A549 (cell line): ENCODE measurements at regions of chr2 and their contacts with region 1.

Region 1: DNA sequence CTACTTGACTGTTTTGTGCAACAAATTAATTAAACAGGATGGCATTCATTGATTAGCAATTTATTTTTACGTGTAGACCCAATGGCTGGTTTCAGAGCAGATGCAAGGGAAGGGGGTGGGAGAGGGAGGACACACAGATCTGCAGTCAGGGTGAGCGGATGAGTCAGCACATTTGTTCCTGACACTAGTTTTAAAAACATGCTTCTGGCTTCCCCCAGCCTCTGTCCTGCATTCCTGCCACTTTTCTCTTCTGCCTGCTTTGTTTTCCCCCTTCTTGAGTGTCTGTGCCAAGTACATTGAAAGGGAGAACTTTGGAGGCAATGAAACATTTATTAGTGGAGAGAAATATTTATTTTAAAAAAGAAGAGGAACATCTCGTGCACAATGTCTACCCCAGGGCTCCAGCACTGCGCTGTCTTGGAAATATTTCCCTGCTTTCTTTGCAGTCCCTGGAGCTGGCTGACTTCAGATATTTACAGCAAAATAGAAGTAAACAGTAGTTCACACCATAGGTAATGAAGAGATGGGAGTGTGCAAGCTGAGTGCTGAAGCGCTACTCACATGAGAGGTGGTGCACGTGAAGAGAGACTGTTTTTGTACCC is 52.2 kb downstream of the NRP2 start:
- DNase-seq: peak in 1 of 2 experiments; percentile 52
- ATAC-seq: peak in 1 of 2 experiments; percentile 50; a peak in 2 of 6 replicates
- H3K4me3 ChIP-seq: no peak overlapping the region
- H3K27ac ChIP-seq: peak overlapping the region; percentile 90 to 91
- H3K4me1 ChIP-seq: peaks cover 58% of the 10 kb centered on the region
- CTCF ChIP-seq: no peak
- EP300 ChIP-seq: no peak
- POLR2A ChIP-seq: no peak
- RAD21 ChIP-seq: no peak

Region 2: GRCh38 chr2:205721057-205721449 is 13.5 kb before region 1 on chr2:
- CTCF ChIA-PET with region 1: interaction called, 18 read pairs
- POLR2A ChIA-PET with region 1: no interaction called
- DNase-seq: no peak
- ATAC-seq: peak; percentile 57 to 67; a peak in 3 of 6 replicates
- H3K4me3 ChIP-seq: no peak overlapping the region
- H3K27ac ChIP-seq: peak overlapping the region; percentile 6 to 72; a peak in 4 of 6 replicates
- H3K4me1 ChIP-seq: peaks cover 89% of the 10 kb centered on the region
- CTCF ChIP-seq: peak; percentile 18; the same call in 2 of the 3 replicates
- EP300 ChIP-seq: no peak
- POLR2A ChIP-seq: no peak
- RAD21 ChIP-seq: no peak; a peak in 1 of 5 replicates

Region 3: DNA sequence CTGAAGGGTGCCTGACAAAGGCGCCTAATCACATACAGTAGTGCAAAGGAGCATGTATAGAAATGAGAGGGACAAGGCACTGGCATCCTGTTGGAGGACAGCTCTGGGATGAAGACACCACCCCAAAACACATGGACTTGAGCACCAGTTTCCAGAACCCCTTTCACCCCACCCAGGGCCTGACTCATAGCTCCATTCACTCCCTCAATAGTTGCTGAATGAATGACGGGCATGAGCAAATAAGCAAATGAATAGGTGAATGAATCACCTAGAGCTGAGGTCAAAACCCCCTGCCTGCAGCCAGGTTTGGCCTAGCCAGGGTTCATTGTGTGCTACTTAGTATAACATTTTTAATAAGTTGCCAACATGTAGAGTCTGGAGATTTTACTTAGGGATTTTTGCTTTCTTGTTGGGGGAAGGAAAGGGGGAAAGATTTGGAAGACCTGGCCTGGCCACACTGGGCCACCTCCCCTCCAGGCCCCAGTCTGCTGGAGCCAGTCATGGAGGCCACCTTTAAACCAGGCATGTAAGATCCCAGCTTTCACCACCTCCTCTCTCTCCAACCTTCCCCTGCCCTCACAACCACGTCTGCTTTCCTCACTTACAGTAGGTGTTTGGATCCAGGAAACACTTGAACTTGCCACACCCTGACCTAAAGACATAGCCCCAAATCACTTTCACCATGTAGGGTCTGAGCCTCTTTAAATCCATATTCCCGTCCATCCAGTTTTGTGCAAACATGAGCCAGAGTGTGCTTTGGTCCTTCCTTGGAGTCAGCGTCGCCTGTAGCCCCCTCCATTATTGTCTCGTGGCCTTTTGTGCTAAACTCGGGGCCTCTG is 14.3 kb after region 1 on chr2:
- CTCF ChIA-PET with region 1: interaction called, 14 read pairs
- POLR2A ChIA-PET with region 1: interaction called, 6 read pairs
- DNase-seq: peak; percentile 83 to 85
- ATAC-seq: peak; percentile 69 to 81
- H3K4me3 ChIP-seq: no peak overlapping the region
- H3K27ac ChIP-seq: peak overlapping the region; percentile 87 to 94
- H3K4me1 ChIP-seq: peaks cover 88% of the 10 kb centered on the region
- CTCF ChIP-seq: no peak
- EP300 ChIP-seq: peak; percentile 49 to 80; a peak in 3 of 5 replicates
- POLR2A ChIP-seq: no peak
- RAD21 ChIP-seq: peak in 1 of 2 experiments; percentile 20; a peak in 1 of 5 replicates

Region 4: GRCh38 chr2:206086716-206087350 is 352.3 kb after region 1 on chr2:
- CTCF ChIA-PET with region 1: no interaction called
- POLR2A ChIA-PET with region 1: no interaction called
- DNase-seq: peak in 1 of 2 experiments; percentile 13
- ATAC-seq: no peak
- H3K4me3 ChIP-seq: peak overlapping the region; percentile 82
- H3K27ac ChIP-seq: peak overlapping the region; percentile 99
- H3K4me1 ChIP-seq: peaks cover 19% of the 10 kb centered on the region; the same call in 2 of the 3 replicates
- CTCF ChIP-seq: no peak
- EP300 ChIP-seq: no peak
- POLR2A ChIP-seq: no peak
- RAD21 ChIP-seq: no peak